Gastrocnemius medialis (tissue), 4 donors: ENCODE measurements at regions of chr3 and their contacts with region 1.

Region 1: DNA sequence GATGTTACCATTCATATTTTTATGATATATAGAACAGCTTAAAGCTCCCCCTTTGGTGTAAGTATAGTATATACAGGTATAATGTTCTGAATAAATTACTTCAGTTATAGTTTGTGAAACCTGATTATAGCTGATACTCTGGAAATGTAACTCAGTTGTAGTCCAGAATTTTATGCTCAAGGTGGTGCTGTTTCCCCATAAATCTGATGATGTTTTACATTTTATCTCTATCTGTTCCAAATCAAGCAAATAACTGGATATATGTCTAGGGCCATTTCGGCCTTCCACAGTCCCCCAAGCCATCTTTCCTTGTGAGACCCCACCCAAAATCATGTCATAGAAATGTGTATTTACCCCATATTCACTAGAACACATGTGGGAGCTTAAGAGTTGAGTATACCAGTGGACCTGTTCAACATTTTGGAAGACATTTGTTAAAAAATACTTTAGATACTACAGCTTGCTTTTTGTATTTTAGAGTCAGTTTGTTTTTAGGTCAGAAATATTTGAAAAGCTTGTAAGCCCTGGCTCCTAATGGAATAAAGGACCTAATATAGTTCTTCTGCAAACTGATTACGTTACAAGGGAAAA is 107.1 kb downstream of the ATG7 start:
- DNase-seq: no peak
- ATAC-seq: peak; percentile 49 to 52
- H3K4me3 ChIP-seq: peak overlapping the region in 2 of 4 donors; percentile 4 to 5
- H3K27ac ChIP-seq: peak overlapping the region; percentile 73 to 81 (median 76)
- H3K4me1 ChIP-seq: peaks cover 32 to 44% of the 10 kb centered on the region in 2 donors
- H3K27me3 ChIP-seq: no peaks in the 10 kb centered on the region
- CTCF ChIP-seq: peak; percentile 63 to 80 (median 68)
- POLR2A ChIP-seq: no peak

Region 2: GRCh38 chr3:11335056-11335608 is 44.2 kb before region 1 on chr3:
- in situ Hi-C with region 1: no loop called
- intact Hi-C with region 1: no loop called
- DNase-seq: no peak
- ATAC-seq: peak; percentile 47 to 77
- H3K4me3 ChIP-seq: no peak overlapping the region
- H3K27ac ChIP-seq: no peak overlapping the region
- H3K4me1 ChIP-seq: no peaks in the 10 kb centered on the region
- H3K27me3 ChIP-seq: no peaks in the 10 kb centered on the region
- CTCF ChIP-seq: peak; percentile 38 to 66 (median 56)
- POLR2A ChIP-seq: no peak

Region 3: DNA sequence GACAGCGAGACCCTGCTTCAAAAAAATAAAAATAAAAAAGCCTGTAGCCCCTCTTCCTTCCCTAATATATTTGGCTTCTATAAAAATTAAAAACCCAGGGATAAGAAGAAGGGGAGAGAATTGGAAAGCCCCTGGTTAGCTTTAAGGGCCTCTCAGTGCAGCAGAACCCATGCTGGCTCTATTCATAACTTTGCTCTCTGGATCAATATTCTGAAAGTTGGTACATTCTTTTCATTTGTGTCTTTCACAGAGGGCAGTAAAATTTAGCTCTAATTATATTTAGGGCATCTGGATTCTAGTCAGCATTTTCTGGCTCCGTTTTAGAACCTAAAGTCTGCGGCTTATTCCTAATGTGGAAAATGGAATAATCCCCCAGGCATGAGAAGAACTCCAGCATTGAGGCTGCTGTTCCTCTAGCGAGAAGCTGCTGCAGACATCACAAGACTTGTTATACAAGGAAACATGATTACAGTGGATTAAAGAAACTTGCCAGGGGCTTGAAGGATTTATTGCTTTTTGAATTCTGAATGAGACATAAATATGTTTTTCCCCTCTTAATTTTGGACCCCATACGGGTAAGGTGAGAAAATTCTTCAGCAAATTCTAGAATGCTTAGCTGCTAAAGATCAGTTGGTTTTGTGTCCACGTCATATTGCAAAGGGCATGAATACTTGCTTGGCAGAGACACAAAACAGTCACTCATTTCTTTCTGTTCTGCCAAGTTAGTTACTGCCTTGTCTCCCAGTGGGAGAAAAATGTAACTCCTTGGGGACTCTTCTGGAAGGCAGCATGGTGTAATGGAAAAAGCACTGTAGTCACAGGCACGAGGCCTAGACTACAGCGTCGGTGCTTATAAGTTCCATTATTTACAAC is 86.7 kb after region 1 on chr3:
- in situ Hi-C with region 1: no loop called
- intact Hi-C with region 1: loop called (anchors 2 kb)
- DNase-seq: peak; percentile 47 to 57
- ATAC-seq: peak; percentile 52 to 72
- H3K4me3 ChIP-seq: no peak overlapping the region
- H3K27ac ChIP-seq: peak overlapping the region; percentile 83 to 87 (median 86)
- H3K4me1 ChIP-seq: peaks cover 47 to 52% of the 10 kb centered on the region in 2 donors
- H3K27me3 ChIP-seq: no peaks in the 10 kb centered on the region
- CTCF ChIP-seq: no peak
- POLR2A ChIP-seq: no peak

Region 4: GRCh38 chr3:11568503-11569155 is 189.3 kb after region 1 on chr3:
- in situ Hi-C with region 1: no loop called
- intact Hi-C with region 1: loop called (anchors 1 kb)
- DNase-seq: peak; percentile 74 to 75
- ATAC-seq: peak; percentile 40 to 67
- H3K4me3 ChIP-seq: peak overlapping the region; percentile 20 to 42 (median 34)
- H3K27ac ChIP-seq: peak overlapping the region; percentile 88 to 90 (median 88)
- H3K4me1 ChIP-seq: peaks cover 42 to 54% of the 10 kb centered on the region in 2 donors
- H3K27me3 ChIP-seq: no peaks in the 10 kb centered on the region
- CTCF ChIP-seq: no peak
- POLR2A ChIP-seq: peak; percentile 11 to 22

Region 5: DNA sequence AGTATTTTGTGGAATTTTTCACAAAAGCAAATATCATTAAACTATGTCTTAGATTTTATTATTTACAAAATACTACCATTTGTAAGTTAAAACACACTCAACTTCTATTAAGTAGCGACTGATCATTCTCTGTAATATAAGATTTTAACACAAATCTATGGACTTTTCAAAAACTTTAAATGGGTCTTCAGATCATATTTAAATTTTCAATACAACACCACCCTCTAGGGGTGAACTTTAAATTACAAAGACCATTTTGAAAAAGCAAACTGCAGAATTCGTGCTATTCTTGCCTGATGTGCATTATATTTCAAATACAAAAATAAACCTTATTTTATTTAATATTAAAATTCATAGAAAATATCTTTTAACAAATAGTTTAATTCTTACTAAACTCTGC is 272.6 kb after region 1 on chr3:
- in situ Hi-C with region 1: loop called (anchors 5 kb)
- intact Hi-C with region 1: loop called (anchors 1 kb)
- DNase-seq: no peak
- ATAC-seq: no peak
- H3K4me3 ChIP-seq: no peak overlapping the region
- H3K27ac ChIP-seq: no peak overlapping the region
- H3K4me1 ChIP-seq: peaks cover 0 to 5% of the 10 kb centered on the region in 2 donors
- H3K27me3 ChIP-seq: no peaks in the 10 kb centered on the region
- CTCF ChIP-seq: peak; percentile 53 to 73 (median 63)
- POLR2A ChIP-seq: no peak

Region 6: GRCh38 chr3:11803977-11804892 is 424.9 kb after region 1 on chr3:
- in situ Hi-C with region 1: loop called (anchors 5 to 10 kb)
- intact Hi-C with region 1: loop called (anchors 2 kb)
- DNase-seq: peak in 1 of 2 donors; percentile 8
- ATAC-seq: peak in 1 of 2 donors; percentile 72
- H3K4me3 ChIP-seq: no peak overlapping the region
- H3K27ac ChIP-seq: no peak overlapping the region
- H3K4me1 ChIP-seq: no peaks in the 10 kb centered on the region
- H3K27me3 ChIP-seq: no peaks in the 10 kb centered on the region
- CTCF ChIP-seq: peak; percentile 30 to 69 (median 61)
- POLR2A ChIP-seq: no peak